ENCODE measurements at regions of chr5 and their contacts with region 1.

Region 1: DNA sequence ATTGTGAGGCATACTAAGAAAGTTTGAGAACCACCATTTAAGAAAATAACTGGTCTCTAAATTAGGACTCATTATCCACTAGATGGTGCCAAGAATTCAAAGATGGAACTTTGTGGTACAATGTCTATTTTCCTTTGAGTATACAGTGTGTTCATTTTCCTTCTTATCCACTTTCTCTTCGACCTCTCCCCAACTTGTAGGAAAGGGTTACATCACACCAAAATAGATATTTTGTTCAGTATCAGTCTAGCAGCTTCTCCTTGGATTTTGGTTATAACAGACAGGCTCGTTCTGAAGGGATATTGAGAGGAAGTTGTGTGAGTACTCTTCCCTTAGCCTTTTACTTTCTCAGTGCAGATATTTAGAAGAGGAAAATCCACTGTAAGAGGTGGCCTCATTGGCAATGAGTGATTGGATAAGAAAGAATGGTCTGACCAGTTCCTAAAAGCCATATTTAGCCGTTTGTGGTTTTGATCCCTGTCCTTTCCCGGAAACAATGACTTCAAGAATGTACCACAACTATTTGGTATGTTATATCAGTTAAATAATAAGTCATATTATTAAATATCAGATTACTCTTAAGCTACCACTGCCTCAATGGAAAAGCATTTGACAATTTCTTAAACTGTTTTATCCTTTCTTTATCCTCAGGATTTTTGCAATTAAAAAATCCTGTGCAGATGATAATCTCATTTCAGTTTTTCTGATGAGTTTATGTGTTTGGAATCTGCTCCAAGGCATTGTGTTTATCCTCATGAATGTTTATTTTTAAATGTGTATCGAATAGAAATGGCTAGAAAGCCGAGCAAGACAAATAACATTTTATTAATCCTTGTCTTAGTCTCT is 69.0 kb upstream of the GRAMD2B start:
- DNase-seq: peak; percentile 58
- ATAC-seq: peak; percentile 85
- H3K4me3 ChIP-seq: peak overlapping the region in 2 of 3 experiments; percentile 12 to 38; a peak in 3 of 6 replicates
- H3K27ac ChIP-seq: no peak overlapping the region
- H3K4me1 ChIP-seq: peaks cover 39% of the 10 kb centered on the region
- H3K27me3 ChIP-seq: no peaks in the 10 kb centered on the region; a peak in 1 of 5 replicates
- CTCF ChIP-seq: peak; percentile 83
- EP300 ChIP-seq: no peak
- POLR2A ChIP-seq: no peak
- RAD21 ChIP-seq: peak; percentile 67

Region 2: DNA sequence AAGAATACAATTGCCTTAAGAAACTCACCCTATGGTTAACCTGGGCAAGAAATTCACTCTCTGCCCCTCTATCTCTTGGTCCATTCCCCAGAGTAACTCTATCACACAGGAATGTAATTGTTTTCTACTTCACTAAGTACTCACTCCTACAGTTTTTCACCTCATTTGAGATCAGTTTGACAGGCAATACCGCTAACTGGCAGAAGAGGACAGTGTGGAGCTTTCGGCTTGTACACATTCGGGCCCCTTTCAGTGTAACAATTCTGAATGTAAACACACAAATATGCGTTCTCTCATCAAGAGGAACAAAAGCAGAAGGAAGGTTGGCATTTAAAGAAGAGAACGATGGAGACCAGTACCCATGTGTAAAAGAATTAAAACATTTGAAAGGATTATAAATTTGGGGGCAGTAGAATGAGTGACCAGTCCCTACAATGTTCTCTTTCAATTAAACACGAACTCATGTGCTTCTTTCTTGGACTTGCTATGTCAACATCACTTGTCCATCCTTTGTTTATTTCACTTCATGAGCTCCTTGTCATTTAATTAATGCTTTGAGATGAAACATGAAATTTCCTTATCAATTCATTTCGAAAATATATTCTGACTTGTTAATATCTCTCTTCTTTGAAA is 119.6 kb before region 1 on chr5:
- CTCF ChIA-PET with region 1: no interaction called
- POLR2A ChIA-PET with region 1: no interaction called
- in situ Hi-C with region 1: no loop called
- intact Hi-C with region 1: no loop called
- DNase-seq: peak; percentile 13
- ATAC-seq: peak; percentile 88
- H3K4me3 ChIP-seq: no peak overlapping the region
- H3K27ac ChIP-seq: no peak overlapping the region
- H3K4me1 ChIP-seq: no peaks in the 10 kb centered on the region
- H3K27me3 ChIP-seq: no peaks in the 10 kb centered on the region; a peak in 1 of 5 replicates
- CTCF ChIP-seq: peak; percentile 69
- EP300 ChIP-seq: no peak
- POLR2A ChIP-seq: no peak
- RAD21 ChIP-seq: no peak

Region 3: DNA sequence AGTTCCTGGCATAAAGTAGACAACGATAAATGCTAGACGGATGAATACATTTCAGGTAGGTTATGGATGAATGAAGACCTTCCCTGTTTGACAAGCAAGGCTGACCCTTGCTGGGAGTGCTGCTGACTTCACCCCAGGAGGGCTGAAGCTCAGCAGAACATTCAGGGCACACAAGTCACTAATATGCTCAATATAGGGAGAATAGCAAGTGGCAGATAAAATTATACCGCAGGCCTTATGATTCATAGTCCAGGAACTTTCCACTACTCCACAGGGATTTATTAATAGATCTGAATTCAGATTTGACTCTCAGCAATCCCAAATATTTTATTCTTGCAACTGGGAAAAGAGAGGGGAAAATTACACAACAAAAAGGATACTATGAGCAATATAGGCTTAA is 30.8 kb after region 1 on chr5:
- CTCF ChIA-PET with region 1: no interaction called
- POLR2A ChIA-PET with region 1: no interaction called
- in situ Hi-C with region 1: no loop called
- intact Hi-C with region 1: no loop called
- DNase-seq: no peak
- ATAC-seq: no peak
- H3K4me3 ChIP-seq: no peak overlapping the region
- H3K27ac ChIP-seq: no peak overlapping the region
- H3K4me1 ChIP-seq: peaks cover 3% of the 10 kb centered on the region
- H3K27me3 ChIP-seq: no peaks in the 10 kb centered on the region
- CTCF ChIP-seq: no peak
- EP300 ChIP-seq: no peak
- POLR2A ChIP-seq: no peak
- RAD21 ChIP-seq: no peak

Region 4: DNA sequence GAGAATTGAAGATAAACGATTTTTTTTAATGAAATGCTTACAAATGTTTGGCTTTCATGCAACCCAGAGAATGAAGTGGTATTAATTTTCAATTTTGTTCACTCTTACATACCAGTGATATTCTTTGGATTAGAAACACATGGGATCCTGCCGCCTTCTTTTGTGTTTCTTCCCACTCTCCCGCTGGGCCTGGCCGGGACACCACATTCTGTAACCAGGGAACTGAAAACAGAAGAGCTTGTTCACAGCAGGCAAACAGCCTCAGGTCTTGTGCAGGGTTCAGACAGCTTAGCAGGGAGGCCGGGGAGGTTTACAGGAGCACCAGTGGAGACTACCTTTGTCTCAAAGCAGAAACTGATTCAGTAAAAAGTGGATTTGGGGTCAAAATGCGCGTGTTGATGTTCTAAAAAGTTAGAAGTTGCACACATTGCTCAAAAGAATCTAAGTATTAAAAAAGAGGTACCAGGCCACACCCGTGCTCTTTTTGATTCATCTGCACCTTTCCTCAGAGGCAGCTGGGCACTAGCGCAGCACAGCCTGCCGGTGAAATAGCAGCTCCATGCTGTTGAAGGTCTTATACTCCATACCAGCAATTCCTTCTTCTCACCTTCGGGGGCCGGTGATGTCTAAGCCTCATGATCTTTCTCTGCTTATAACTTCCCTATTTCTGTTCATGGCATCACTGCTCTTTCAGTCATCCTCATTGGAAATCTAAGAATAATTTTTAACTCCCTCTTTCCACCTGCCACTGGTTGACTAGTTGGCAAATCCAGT is 136.1 kb after region 1 on chr5:
- CTCF ChIA-PET with region 1: interaction called, 9 read pairs
- POLR2A ChIA-PET with region 1: no interaction called
- in situ Hi-C with region 1: loop called (anchors 5 kb)
- intact Hi-C with region 1: loop called (anchors 1 kb)
- DNase-seq: no peak
- ATAC-seq: peak; percentile 75
- H3K4me3 ChIP-seq: no peak overlapping the region
- H3K27ac ChIP-seq: no peak overlapping the region
- H3K4me1 ChIP-seq: no peaks in the 10 kb centered on the region
- H3K27me3 ChIP-seq: no peaks in the 10 kb centered on the region
- CTCF ChIP-seq: no peak
- EP300 ChIP-seq: no peak
- POLR2A ChIP-seq: no peak
- RAD21 ChIP-seq: no peak

Region 5: DNA sequence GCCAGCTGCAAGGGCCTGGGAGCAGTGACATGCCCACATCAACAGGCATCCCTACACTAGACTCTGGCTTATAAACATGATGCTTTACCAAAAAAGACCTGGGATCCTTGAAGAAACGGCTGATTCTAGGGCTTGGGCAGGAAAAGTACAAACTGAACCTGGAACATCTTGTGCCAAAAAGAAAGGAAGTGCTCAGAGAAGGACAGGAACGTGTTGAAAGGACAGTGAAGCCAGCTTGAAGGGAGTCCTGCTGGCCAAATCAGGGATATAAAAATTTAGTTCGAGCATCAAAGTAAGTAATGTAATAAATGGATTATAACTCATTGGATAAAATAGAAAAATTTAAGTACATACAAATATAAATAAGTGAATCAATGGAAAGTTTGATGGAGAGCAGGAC is 182.6 kb after region 1 on chr5:
- CTCF ChIA-PET with region 1: interaction called, 40 read pairs
- POLR2A ChIA-PET with region 1: no interaction called
- in situ Hi-C with region 1: loop called (anchors 5 kb)
- intact Hi-C with region 1: loop called (anchors 1 kb)
- DNase-seq: no peak
- ATAC-seq: no peak
- H3K4me3 ChIP-seq: no peak overlapping the region
- H3K27ac ChIP-seq: no peak overlapping the region
- H3K4me1 ChIP-seq: peaks cover 14% of the 10 kb centered on the region
- H3K27me3 ChIP-seq: no peaks in the 10 kb centered on the region; a peak in 1 of 5 replicates
- CTCF ChIP-seq: no peak
- EP300 ChIP-seq: no peak
- POLR2A ChIP-seq: no peak
- RAD21 ChIP-seq: no peak

Region 6: GRCh38 chr5:126544087-126544740 is 190.0 kb after region 1 on chr5:
- CTCF ChIA-PET with region 1: interaction called, 40 read pairs
- POLR2A ChIA-PET with region 1: no interaction called
- in situ Hi-C with region 1: loop called (anchors 5 kb)
- intact Hi-C with region 1: loop called (anchors 1 kb)
- DNase-seq: peak; percentile 58
- ATAC-seq: peak; percentile 86
- H3K4me3 ChIP-seq: no peak overlapping the region
- H3K27ac ChIP-seq: peak overlapping the region; percentile 60
- H3K4me1 ChIP-seq: peaks cover 26% of the 10 kb centered on the region
- H3K27me3 ChIP-seq: no peaks in the 10 kb centered on the region
- CTCF ChIP-seq: peak; percentile 79
- EP300 ChIP-seq: no peak
- POLR2A ChIP-seq: no peak
- RAD21 ChIP-seq: peak; percentile 57; the same call in 1 of the 2 replicates